A549 (cell line): ENCODE measurements at regions of chr17 and their contacts with region 1.

Region 1: GRCh38 chr17:68398691-68399637 is 58.3 kb downstream of the WIPI1 start:
- DNase-seq: peak; percentile 82 to 96
- ATAC-seq: peak; percentile 94 to 97
- H3K4me3 ChIP-seq: no peak overlapping the region
- H3K27ac ChIP-seq: peak overlapping the region; percentile 37 to 64; a peak in 5 of 6 replicates
- H3K4me1 ChIP-seq: 0 out of 3 replicates have a peak, but pooled peaks cover 3% of the 10 kb centered on the region
- CTCF ChIP-seq: peak; percentile 95
- EP300 ChIP-seq: no peak
- POLR2A ChIP-seq: no peak
- RAD21 ChIP-seq: peak; percentile 92 to 95

Region 2: GRCh38 chr17:68255731-68256538 is 143.0 kb before region 1 on chr17:
- CTCF ChIA-PET with region 1: interaction called, 122 read pairs
- POLR2A ChIA-PET with region 1: no interaction called
- DNase-seq: no peak
- ATAC-seq: no peak
- H3K4me3 ChIP-seq: no peak overlapping the region
- H3K27ac ChIP-seq: no peak overlapping the region
- H3K4me1 ChIP-seq: no peaks in the 10 kb centered on the region
- CTCF ChIP-seq: no peak
- EP300 ChIP-seq: no peak
- POLR2A ChIP-seq: no peak
- RAD21 ChIP-seq: no peak

Region 3: GRCh38 chr17:68310152-68310551 is 88.8 kb before region 1 on chr17:
- CTCF ChIA-PET with region 1: interaction called, 13 read pairs
- POLR2A ChIA-PET with region 1: no interaction called
- DNase-seq: no peak
- ATAC-seq: peak; percentile 40 to 59; a peak in 3 of 6 replicates
- H3K4me3 ChIP-seq: no peak overlapping the region
- H3K27ac ChIP-seq: no peak overlapping the region
- H3K4me1 ChIP-seq: peaks cover 13% of the 10 kb centered on the region; the same call in 2 of the 3 replicates
- CTCF ChIP-seq: no peak
- EP300 ChIP-seq: no peak
- POLR2A ChIP-seq: no peak
- RAD21 ChIP-seq: no peak

Region 4: DNA sequence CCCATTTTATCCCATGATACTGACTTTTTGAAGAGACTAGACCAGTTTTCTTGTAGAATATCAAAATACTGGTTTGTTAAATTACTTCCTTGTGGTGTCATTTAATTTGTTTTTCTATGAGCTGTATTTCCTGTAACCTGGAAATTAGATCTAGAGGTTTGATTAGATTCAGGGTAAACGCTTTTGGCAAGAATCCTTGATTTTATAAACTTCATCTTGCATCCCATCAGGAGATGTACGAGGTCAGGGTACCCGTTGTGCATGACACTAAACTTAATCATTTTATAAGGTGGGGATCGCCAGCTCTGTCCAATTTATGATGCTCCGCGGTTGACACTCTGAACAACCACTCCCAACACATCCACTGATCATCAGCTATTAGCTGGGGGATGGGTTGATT is 59.4 kb before region 1 on chr17:
- CTCF ChIA-PET with region 1: interaction called, 13 read pairs
- POLR2A ChIA-PET with region 1: no interaction called
- DNase-seq: no peak
- ATAC-seq: no peak
- H3K4me3 ChIP-seq: no peak overlapping the region
- H3K27ac ChIP-seq: no peak overlapping the region
- H3K4me1 ChIP-seq: no peaks in the 10 kb centered on the region
- CTCF ChIP-seq: no peak
- EP300 ChIP-seq: no peak
- POLR2A ChIP-seq: no peak
- RAD21 ChIP-seq: no peak

Region 5: DNA sequence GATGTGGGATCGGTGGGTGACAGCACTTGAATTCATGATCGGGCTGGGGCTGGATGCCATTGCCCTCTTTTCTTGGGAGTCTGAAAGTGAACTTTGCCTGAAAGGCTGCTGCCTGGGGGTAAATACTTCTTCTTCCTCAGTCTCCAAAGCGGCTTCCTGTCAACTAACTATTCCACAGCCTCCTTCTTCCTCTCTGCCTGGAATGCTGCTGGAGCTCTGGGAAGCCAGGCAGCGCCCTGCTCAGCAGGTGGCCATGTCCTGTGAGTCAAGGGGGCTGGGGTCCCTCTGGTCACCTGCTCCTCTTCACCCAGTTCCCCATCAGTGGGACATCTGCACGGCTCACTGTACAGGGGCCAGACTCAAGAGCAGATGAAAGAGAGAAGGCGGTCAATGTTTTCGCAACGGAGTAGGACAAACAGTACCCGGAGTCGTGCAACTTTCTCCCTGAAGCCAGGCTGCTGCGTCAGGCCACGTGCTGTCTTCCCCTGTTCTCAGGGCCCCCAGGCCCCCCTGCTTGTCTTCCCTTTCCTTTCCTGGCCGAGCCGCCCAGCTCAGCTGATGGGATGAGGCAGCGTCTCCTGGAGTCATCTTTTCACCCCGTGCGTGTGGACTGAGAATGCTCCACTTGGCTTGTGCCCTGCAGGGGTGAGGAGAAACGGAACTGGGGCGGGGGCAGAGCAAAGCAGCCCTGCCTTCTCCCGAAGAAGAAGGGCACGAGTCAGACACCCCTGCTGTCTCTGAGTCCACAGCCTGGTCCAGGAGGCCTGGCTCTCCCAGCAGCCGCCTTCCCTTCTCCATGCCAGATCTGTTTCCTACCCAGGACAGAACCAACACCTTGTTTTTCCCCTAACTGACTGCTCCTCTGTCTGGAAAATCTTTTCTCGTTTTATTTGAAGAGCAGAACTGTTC is 20.8 kb before region 1 on chr17:
- CTCF ChIA-PET with region 1: interaction called, 20 read pairs
- POLR2A ChIA-PET with region 1: no interaction called
- DNase-seq: peak; percentile 63 to 80
- ATAC-seq: peak; percentile 81 to 87
- H3K4me3 ChIP-seq: peak overlapping the region; percentile 23; the same call in 2 of the 3 replicates
- H3K27ac ChIP-seq: peak overlapping the region; percentile 84 to 86
- H3K4me1 ChIP-seq: peaks cover 56% of the 10 kb centered on the region
- CTCF ChIP-seq: no peak
- EP300 ChIP-seq: no peak; a peak in 2 of 5 replicates
- POLR2A ChIP-seq: no peak
- RAD21 ChIP-seq: no peak

Region 6: DNA sequence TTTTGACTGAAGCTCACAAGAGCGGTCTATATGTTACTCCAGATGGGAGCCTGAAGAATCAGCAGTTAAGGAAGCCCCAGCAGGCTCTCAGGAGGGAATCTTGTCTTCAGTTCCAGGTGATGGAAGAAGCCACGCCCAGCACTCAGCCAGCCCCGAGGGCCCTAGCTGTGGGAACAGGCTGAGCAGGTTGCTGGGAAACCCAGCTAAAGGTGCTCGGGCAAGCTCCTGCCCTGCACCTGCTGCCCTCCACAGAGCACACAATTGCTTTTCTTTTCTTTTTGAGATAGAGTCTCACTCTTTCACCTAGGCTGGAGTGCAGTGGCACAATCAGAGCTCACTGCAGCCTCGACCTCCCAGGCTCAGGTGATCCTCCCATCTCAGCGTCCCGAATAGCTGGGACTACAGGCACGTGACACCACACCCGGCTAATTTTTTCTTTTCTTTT is 26.0 kb after region 1 on chr17:
- CTCF ChIA-PET with region 1: interaction called, 65 read pairs
- POLR2A ChIA-PET with region 1: no interaction called
- DNase-seq: no peak
- ATAC-seq: no peak
- H3K4me3 ChIP-seq: no peak overlapping the region
- H3K27ac ChIP-seq: no peak overlapping the region
- H3K4me1 ChIP-seq: no peaks in the 10 kb centered on the region
- CTCF ChIP-seq: no peak
- EP300 ChIP-seq: no peak
- POLR2A ChIP-seq: no peak
- RAD21 ChIP-seq: no peak

Region 7: GRCh38 chr17:68480885-68481284 is 81.9 kb after region 1 on chr17:
- CTCF ChIA-PET with region 1: no interaction called
- POLR2A ChIA-PET with region 1: no interaction called
- DNase-seq: no peak
- ATAC-seq: no peak
- H3K4me3 ChIP-seq: no peak overlapping the region
- H3K27ac ChIP-seq: no peak overlapping the region
- H3K4me1 ChIP-seq: no peaks in the 10 kb centered on the region
- CTCF ChIP-seq: no peak
- EP300 ChIP-seq: no peak
- POLR2A ChIP-seq: no peak
- RAD21 ChIP-seq: no peak

Region 8: DNA sequence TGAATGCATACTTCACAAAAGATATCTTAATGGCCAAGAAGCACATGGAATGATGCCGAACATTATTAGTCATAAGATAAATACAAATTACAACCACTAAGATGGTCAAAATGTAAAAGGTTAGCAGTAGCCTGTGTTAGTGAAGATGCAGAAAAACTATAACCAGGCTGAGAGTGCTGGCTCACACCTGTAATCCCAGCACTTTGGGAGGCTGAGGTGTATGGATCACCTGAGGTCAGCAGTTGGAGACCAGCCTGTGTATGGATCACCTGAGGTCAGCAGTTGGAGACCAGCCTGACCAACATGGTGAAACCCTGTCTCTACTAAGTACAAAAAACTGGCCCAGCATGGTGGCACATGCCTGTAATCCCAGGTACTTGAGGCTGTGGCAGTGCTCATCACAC is 247.7 kb after region 1 on chr17:
- CTCF ChIA-PET with region 1: no interaction called
- POLR2A ChIA-PET with region 1: no interaction called
- DNase-seq: no peak
- ATAC-seq: no peak
- H3K4me3 ChIP-seq: no peak overlapping the region
- H3K27ac ChIP-seq: no peak overlapping the region
- H3K4me1 ChIP-seq: no peaks in the 10 kb centered on the region
- CTCF ChIP-seq: no peak
- EP300 ChIP-seq: no peak
- POLR2A ChIP-seq: no peak
- RAD21 ChIP-seq: no peak